ENCODE measurements at regions of chr19 and their contacts with region 1.

Region 1: DNA sequence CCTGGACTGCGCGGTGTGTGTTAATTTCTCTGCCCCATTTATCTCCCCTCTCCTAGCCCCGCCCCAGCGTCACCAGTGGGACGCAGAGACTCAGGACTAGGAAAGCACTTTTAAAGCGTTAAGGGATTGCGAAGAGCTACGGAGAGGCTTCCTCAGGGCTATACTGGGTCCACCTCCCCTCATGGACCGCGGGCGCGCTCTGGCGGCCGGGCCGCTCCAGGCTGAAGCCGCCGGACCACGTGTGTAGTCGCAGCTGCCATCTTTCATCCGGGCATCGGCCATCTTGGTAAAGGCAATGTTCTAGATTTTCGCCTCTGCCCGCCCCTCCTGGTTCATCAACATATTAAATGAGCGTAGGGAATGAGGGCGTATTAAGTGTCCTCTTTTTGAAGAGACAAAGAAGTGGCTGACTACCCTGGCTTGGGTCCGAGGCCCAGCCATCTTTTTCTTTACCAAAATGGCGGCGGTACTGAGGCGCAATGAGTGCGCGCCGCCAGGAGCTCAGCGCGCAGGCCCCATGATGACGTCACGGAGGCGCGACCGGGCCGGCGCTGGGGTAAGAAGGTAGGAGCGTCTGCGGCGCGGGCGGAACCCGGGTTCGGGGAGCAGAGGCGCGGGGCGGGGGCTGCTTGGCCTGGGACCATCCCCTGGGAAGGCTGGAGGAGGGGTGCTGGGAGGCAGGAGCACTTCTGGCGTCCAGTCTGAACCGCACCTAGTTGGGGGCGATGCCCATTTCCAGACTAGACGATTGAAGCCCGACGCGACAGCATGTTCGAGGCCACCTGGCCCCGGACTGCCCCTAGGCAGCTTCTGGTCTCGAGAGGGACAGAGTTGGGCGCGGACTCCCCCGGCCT is at the start of gene CCDC124:
- DNase-seq: peak; percentile 83 to 95 (median 91)
- ATAC-seq: peak; percentile 92
- H3K4me3 ChIP-seq: peak within 1 kb of the TSS; percentile 76 to 82
- H3K4me3 Mint-ChIP-seq: peak within 1 kb of the TSS; percentile 92
- H3K27ac ChIP-seq: peak within 1 kb of the TSS; percentile 75 to 99
- H3K27ac Mint-ChIP-seq: peak within 1 kb of the TSS; percentile 95
- H3K4me1 ChIP-seq: peaks cover 15% of the 10 kb centered on the region
- H3K4me1 Mint-ChIP-seq: peaks cover 21% of the 10 kb centered on the region
- H3K27me3 ChIP-seq: no peaks in the 10 kb centered on the region
- H3K27me3 Mint-ChIP-seq: no peaks in the 10 kb centered on the region
- CTCF ChIP-seq: peak; percentile 89
- total RNA-seq, gene CCDC124: 29.7 to 35.9 TPM

Region 2: GRCh38 chr19:17847538-17848366 is 85.0 kb before region 1 on chr19 and contains the start of gene JAK3:
- CTCF ChIA-PET with region 1: interaction called, 26 read pairs
- POLR2A ChIA-PET with region 1: interaction called, 5 read pairs
- intact Hi-C with region 1: no loop called
- DNase-seq: peak; percentile 57 to 95 (median 86)
- ATAC-seq: peak; percentile 82
- H3K4me3 ChIP-seq: peak within 1 kb of the TSS; percentile 66
- H3K4me3 Mint-ChIP-seq: peak within 1 kb of the TSS; percentile 92
- H3K27ac ChIP-seq: peak within 1 kb of the TSS; percentile 84 to 85
- H3K27ac Mint-ChIP-seq: peak within 1 kb of the TSS; percentile 95
- H3K4me1 ChIP-seq: peaks cover 71% of the 10 kb centered on the region
- H3K4me1 Mint-ChIP-seq: peaks cover 69% of the 10 kb centered on the region
- H3K27me3 ChIP-seq: no peaks in the 10 kb centered on the region
- H3K27me3 Mint-ChIP-seq: no peaks in the 10 kb centered on the region
- CTCF ChIP-seq: no peak
- total RNA-seq, gene JAK3: 113 to 119 TPM

Region 3: GRCh38 chr19:17873786-17874757 is 58.6 kb before region 1 on chr19:
- CTCF ChIA-PET with region 1: interaction called, 8 read pairs
- POLR2A ChIA-PET with region 1: interaction called, 8 read pairs
- intact Hi-C with region 1: loop called in 1 of 2 experiments (anchors 1 kb)
- DNase-seq: peak; percentile 34 to 81 (median 66)
- ATAC-seq: peak; percentile 85
- H3K4me3 ChIP-seq: peak overlapping the region; percentile 47 to 59
- H3K4me3 Mint-ChIP-seq: peak overlapping the region; percentile 81
- H3K27ac ChIP-seq: no peak overlapping the region
- H3K27ac Mint-ChIP-seq: no peak overlapping the region
- H3K4me1 ChIP-seq: peaks cover 32% of the 10 kb centered on the region
- H3K4me1 Mint-ChIP-seq: peaks cover 16% of the 10 kb centered on the region
- H3K27me3 ChIP-seq: peaks cover 0 to 15% of the 10 kb centered on the region in 2 experiments
- H3K27me3 Mint-ChIP-seq: no peaks in the 10 kb centered on the region
- CTCF ChIP-seq: no peak

Region 4: DNA sequence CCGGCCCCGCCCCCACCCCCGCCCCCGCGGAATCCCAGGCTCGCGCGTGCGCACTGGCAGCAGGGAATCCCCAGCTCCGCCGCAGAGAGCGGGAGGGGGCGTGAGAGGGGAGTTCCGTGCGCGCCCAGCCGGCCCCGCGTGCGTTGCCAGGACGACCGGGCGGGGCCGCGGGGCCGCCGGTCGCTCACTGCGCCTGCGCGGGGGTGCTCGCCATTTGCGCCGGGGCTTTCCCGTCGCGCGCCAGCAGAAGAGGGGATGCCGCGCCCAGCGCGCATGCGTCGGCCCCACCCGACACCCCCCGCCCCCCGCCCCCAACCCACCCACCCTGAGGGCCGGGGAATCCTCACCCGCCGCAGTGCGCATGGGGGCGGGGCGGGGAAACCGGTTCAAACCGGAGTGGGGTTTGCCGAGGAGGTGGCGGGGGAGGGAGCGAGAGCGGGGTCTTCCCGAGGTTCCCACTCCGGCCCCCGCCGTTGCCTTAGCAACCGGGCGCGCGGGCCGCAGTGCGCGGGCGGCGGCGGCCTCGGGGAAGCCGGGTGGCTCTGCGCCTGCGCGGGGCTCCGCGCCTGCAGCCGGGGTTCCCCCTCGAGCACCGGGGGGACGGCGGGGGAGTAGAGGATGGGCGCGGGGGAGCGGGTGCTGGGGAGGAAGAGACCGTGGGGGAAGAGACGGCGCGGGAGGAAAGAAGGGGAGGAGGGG is 15.3 kb after region 1 on chr19:
- CTCF ChIA-PET with region 1: interaction called, 39 read pairs
- POLR2A ChIA-PET with region 1: interaction called, 6 read pairs
- intact Hi-C with region 1: loop called in 1 of 2 experiments (anchors 1 kb)
- DNase-seq: peak; percentile 88 to 99 (median 95)
- ATAC-seq: peak; percentile 66
- H3K4me3 ChIP-seq: peak overlapping the region; percentile 35 to 57
- H3K4me3 Mint-ChIP-seq: peak overlapping the region; percentile 74
- H3K27ac ChIP-seq: peak overlapping the region; percentile 44 to 93
- H3K27ac Mint-ChIP-seq: no peak overlapping the region
- H3K4me1 ChIP-seq: peaks cover 53% of the 10 kb centered on the region
- H3K4me1 Mint-ChIP-seq: peaks cover 49% of the 10 kb centered on the region
- H3K27me3 ChIP-seq: peaks cover 39% of the 10 kb centered on the region in 2 experiments
- H3K27me3 Mint-ChIP-seq: peaks cover 30% of the 10 kb centered on the region
- CTCF ChIP-seq: no peak

Measured in CD8-positive, alpha-beta T cell (primary cell).